ENCODE measurements at regions of chr15 and their contacts with region 1.

Region 1: DNA sequence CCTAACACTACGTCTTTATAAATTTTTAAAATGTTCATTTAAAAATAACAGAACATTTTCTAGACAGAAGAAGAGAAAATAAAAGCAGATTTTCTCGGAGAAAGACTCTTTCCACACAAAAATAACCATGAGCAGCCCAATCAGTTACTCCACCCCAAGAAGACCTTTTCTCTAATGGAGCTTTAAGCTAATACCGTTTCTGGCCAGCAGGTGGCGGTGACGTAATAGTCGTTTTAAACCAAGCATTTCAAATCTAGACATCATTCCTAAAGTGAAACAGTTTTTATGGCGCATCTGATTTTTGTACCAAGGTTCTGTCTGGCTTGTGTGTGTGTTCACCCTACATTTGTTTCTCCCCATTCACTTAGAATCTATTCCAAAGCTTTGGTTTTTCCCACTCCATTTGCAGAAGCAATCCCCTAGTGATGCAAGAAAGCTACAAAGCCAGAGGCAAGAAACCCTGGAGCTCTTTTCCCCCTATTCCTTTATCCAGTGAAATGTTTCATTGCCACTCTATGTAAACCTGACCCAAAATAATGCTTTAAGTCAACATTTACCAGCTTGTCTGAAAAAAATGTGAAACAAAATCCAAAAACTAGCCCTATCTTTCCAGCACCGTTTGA is 336.7 kb upstream of the IGF1R start:
- DNase-seq: peak; percentile 58 to 76 (median 65)
- ATAC-seq: peak; percentile 66 to 84 (median 78)
- H3K4me3 ChIP-seq: no peak overlapping the region
- H3K27ac ChIP-seq: no peak overlapping the region
- H3K4me1 ChIP-seq: no peaks in the 10 kb centered on the region
- H3K27me3 ChIP-seq: no peaks in the 10 kb centered on the region
- CTCF ChIP-seq: peak; percentile 80 to 85 (median 82)
- POLR2A ChIP-seq: no peak

Region 2: GRCh38 chr15:98142572-98142971 is 169.1 kb before region 1 on chr15:
- intact Hi-C with region 1: no loop called
- DNase-seq: no peak
- ATAC-seq: no peak
- H3K4me3 ChIP-seq: no peak overlapping the region
- H3K27ac ChIP-seq: no peak overlapping the region
- H3K4me1 ChIP-seq: no peaks in the 10 kb centered on the region
- H3K27me3 ChIP-seq: no peaks in the 10 kb centered on the region
- CTCF ChIP-seq: no peak
- POLR2A ChIP-seq: no peak

Region 3: GRCh38 chr15:98421419-98422129 is 109.9 kb after region 1 on chr15:
- intact Hi-C with region 1: loop called (anchors 5 kb)
- DNase-seq: peak; percentile 65 to 69 (median 67)
- ATAC-seq: peak; percentile 75 to 89 (median 86)
- H3K4me3 ChIP-seq: peak overlapping the region in 1 of 3 donors; percentile 40
- H3K27ac ChIP-seq: no peak overlapping the region
- H3K4me1 ChIP-seq: peaks cover 0 to 7% (median 0%) of the 10 kb centered on the region in 4 donors
- H3K27me3 ChIP-seq: peaks cover 0 to 3% of the 10 kb centered on the region in 2 donors
- CTCF ChIP-seq: peak; percentile 93 to 99 (median 99)
- POLR2A ChIP-seq: no peak